Panc1 (cell line): ENCODE measurements at regions of chr11 and their contacts with region 1.

Region 1: DNA sequence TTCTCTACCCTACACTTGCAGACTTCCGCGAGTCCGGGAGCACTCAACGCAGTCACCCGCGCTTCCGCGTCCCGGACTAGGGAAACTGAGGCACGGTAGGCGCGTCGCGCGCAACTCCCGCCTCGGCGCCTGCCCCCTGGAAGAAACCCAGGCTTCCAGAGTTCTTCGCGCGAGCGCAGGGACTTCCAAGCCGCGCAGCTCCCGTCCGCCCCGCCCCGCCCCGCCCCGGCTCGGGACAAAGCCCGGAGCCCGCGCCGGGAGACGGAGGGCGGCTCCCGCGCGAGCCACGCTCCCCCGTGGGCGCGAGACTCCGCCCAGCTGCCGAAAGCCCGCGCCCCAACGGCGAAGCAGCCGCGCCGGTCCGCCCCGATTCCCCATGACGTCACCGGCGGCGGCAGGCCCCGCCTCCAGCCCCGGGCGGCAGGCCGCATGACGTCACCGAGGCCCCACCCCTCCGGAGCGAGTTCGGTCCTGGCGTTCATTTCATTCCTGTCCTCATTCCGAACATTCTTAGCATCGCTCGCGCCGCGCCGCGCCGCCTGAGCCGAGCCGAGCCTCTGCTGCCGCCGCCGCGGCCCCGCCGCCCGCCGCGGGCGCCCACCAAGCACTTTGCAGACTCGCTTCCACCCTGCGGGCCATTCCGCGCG is at the start of gene TEAD1:
- DNase-seq: peak; percentile 51
- ATAC-seq: peak; percentile 93
- H3K4me3 ChIP-seq: peak within 1 kb of the TSS; percentile 78 to 82
- H3K27ac ChIP-seq: peak within 1 kb of the TSS; percentile 90
- H3K4me1 ChIP-seq: peaks cover 31% of the 10 kb centered on the region
- H3K27me3 ChIP-seq: no peaks in the 10 kb centered on the region
- CTCF ChIP-seq: no peak
- total RNA-seq, gene TEAD1: 102 TPM

Region 2: GRCh38 chr11:12331239-12331874 is 342.7 kb before region 1 on chr11:
- CTCF ChIA-PET with region 1: no interaction called
- POLR2A ChIA-PET with region 1: no interaction called
- in situ Hi-C with region 1: no loop called
- intact Hi-C with region 1: loop called (anchors 5 kb)
- DNase-seq: peak; percentile 71
- ATAC-seq: peak; percentile 94
- H3K4me3 ChIP-seq: no peak overlapping the region
- H3K27ac ChIP-seq: no peak overlapping the region
- H3K4me1 ChIP-seq: no peaks in the 10 kb centered on the region
- H3K27me3 ChIP-seq: no peaks in the 10 kb centered on the region
- CTCF ChIP-seq: peak; percentile 85

Region 3: GRCh38 chr11:12411806-12412727 is 262.0 kb before region 1 on chr11:
- CTCF ChIA-PET with region 1: no interaction called
- POLR2A ChIA-PET with region 1: no interaction called
- in situ Hi-C with region 1: no loop called
- intact Hi-C with region 1: loop called (anchors 10 kb)
- DNase-seq: no peak
- ATAC-seq: peak; percentile 95
- H3K4me3 ChIP-seq: no peak overlapping the region
- H3K27ac ChIP-seq: peak overlapping the region; percentile 20; the same call in 1 of the 2 replicates
- H3K4me1 ChIP-seq: peaks cover 10% of the 10 kb centered on the region
- H3K27me3 ChIP-seq: no peaks in the 10 kb centered on the region
- CTCF ChIP-seq: peak; percentile 86

Region 4: DNA sequence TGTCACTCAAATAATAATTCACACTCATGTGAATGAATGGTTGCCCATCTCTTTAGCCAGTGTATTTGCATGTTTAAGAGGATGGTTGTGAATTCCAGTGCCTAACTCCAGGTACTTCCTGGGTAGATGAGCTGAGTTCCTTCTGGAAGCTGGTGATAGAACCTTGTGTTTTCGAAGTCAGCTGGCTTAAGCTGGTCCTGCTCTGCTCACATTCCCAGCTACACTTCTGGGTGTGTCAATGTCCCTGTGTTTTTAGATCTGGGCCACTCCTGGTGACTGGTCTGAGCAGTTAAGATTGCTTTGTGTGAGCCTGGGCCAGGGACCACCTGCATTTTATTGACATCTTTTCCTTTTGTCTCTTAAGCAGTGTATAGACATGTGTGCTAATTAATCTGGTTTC is 10.8 kb after region 1 on chr11:
- CTCF ChIA-PET with region 1: no interaction called
- POLR2A ChIA-PET with region 1: no interaction called
- in situ Hi-C with region 1: no loop called
- intact Hi-C with region 1: no loop called
- DNase-seq: no peak
- ATAC-seq: no peak
- H3K4me3 ChIP-seq: no peak overlapping the region
- H3K27ac ChIP-seq: peak overlapping the region; percentile 56
- H3K4me1 ChIP-seq: peaks cover 97% of the 10 kb centered on the region
- H3K27me3 ChIP-seq: no peaks in the 10 kb centered on the region
- CTCF ChIP-seq: no peak

Region 5: DNA sequence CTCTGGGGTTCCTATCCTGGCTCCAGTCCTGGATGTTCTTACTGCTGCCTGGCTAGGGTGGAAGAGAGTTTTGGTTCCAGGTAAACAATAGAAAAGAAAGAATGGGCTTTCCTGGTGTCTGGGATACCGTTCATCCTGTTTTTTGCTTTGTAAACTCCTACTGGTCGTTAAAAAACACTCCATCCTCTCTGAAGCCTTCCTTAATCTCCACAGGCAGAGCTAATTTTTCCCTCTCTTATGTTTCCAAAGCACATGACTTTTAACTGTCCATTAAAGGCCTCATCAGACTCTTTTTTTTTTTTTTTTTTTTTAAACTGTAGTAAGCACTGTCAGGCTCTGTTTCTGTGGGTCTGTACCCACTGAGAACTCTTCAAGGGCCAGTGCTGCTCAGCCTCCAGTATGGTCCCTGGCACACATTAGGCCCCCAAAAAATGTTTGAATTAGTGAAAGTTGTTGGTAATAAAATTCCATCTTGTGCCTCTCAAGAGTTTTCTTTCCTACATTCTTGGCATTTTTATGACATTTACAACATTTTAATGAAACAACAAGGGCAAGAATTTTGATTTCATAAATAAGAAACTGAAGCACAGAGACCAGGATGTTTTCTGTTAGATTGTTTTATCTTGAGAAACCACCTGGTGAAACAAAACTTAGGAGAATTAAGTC is 104.3 kb after region 1 on chr11:
- CTCF ChIA-PET with region 1: interaction called, 10 read pairs
- POLR2A ChIA-PET with region 1: no interaction called
- in situ Hi-C with region 1: no loop called
- intact Hi-C with region 1: no loop called
- DNase-seq: no peak
- ATAC-seq: no peak
- H3K4me3 ChIP-seq: no peak overlapping the region
- H3K27ac ChIP-seq: no peak overlapping the region
- H3K4me1 ChIP-seq: 0 out of 2 replicates have a peak, but pooled peaks cover 2% of the 10 kb centered on the region
- H3K27me3 ChIP-seq: no peaks in the 10 kb centered on the region
- CTCF ChIP-seq: no peak

Region 6: DNA sequence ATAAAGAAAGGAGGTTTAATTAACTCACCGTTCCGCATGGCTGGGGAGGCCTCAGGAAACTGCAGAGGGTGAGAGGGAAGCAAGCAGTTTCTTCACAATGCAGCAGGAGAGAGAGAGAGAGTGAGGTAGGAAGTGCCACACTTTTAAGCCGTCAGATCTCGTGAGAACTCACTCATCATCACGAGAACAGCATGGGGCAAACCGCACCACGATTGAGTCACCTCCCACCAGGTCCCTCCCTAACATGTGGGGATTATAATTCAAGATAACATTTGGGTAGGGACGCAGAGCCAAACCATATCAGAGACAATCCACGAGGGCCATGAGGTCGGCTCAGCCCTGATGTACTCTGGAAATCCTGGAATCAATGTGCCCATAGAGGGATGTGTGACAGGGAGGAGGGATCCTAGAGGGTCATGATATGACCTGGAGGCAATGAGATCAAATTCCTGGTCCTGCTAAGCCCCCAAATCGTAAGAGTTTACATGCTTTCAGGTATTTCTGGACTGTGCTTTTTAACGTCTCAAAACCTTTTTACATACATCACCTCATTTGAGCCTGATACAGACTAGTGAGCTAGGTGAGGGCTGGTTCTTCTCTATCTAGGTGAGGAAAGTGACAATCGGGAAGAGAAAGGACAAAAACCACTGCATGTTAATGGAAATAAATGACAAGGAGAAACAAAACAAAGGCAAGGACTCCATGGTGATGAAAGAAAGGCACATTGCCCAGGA is 315.5 kb after region 1 on chr11:
- CTCF ChIA-PET with region 1: no interaction called
- POLR2A ChIA-PET with region 1: no interaction called
- in situ Hi-C with region 1: no loop called
- intact Hi-C with region 1: no loop called
- DNase-seq: no peak
- ATAC-seq: no peak
- H3K4me3 ChIP-seq: no peak overlapping the region
- H3K27ac ChIP-seq: no peak overlapping the region
- H3K4me1 ChIP-seq: no peaks in the 10 kb centered on the region
- H3K27me3 ChIP-seq: peaks cover 13% of the 10 kb centered on the region
- CTCF ChIP-seq: no peak